AG04449 (cell line): ENCODE measurements at regions of chr4 and their contacts with region 1.

Region 1: GRCh38 chr4:44629280-44629866 is 22.1 kb downstream of the YIPF7 start:
- DNase-seq: no peak
- H3K4me3 ChIP-seq: no peak overlapping the region
- CTCF ChIP-seq: peak; percentile 51

Region 2: GRCh38 chr4:42995343-42995944 is 1633.9 kb before region 1 on chr4:
- CTCF ChIA-PET with region 1: interaction called, 12 read pairs
- POLR2A ChIA-PET with region 1: no interaction called
- DNase-seq: no peak
- H3K4me3 ChIP-seq: no peak overlapping the region
- CTCF ChIP-seq: peak; percentile 33

Region 3: DNA sequence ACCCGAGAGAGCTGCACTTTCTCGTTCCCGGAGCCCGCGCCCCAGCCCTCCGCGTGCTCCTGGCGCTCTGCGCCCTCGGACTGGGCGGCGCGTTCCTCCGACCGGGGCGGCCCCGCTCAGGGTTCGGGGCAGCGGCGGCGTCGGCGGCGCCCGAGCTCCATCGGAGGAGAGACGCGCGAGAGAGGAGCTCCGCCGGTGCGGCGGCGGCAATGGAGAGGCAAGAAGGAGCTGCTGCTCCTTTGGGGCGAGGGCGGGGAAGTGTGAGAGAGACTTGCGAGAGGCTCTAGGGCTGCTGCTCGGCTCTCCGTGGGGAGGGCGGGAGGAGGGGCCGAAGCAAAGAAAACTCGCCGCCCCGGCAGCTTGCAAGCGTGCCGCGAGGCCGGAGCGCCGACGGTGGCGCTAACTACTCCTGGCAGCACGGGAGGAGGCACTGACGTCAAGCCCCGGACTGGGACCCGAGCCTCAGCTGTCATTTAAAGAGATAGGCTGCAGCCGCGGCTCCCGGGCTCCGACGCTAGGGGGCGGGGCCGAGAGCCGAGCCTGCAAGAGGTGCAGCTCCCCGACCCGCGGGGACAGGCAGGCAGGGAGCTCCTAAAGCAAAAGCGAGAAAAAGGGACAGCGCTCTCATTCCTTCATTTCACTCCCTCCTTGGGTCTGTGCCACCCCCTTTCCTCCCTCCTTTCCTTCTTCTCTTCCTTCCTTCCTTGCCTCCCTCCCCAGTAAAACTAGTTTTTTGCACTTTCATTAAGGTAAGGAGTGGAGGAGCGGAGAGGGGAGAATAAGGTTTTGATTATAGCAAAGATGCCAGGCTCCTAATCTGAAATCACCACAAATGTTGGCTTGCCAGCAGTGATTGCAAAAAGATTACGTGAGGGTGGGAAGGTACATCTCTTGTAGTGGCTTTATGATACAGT is 180.6 kb before region 1 on chr4 and contains the start of gene KCTD8:
- CTCF ChIA-PET with region 1: no interaction called
- POLR2A ChIA-PET with region 1: no interaction called
- DNase-seq: no peak
- H3K4me3 ChIP-seq: peak within 1 kb of the TSS; percentile 43
- CTCF ChIP-seq: peak; percentile 65